ENCODE measurements at regions of chr12 and their contacts with region 1.

Region 1: DNA sequence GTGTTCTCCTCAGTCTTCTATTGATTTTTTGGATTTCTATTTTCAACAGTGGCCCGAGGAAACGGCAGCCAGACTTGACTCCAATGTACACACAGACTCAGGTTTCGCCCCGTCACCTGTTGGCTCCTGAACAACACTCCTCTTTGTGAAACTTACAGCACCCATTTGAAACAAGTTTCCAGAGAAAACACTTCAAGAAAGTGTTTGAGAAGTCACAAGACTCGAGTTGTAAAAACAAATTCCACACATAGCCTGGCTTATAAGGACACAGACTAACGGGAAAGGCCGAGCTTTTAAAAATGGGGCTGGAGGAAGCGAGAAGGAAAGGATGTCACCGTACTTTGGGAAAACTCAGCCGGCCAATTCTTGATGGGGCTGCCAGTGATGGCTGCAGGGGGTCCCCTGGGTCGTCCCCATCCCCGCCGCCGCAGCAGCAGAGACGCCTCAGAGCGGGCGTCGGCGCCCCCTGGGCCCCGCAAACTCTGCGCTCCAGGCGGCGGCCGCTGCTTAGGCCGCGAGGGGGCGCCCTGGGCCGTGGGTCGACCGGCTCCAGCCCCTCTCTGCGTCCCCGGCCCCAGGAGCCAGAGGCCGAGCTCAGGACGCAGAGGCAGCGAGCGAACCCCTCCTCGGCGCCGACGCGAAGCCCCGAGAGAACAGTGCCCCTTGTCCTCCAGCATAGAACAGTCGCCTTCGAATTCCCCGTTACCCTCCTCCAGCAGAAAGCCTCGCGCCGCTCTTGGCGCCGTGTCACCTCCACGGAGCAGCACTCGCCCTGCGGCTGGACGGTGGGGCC is 106.9 kb downstream of the PRICKLE1 start:
- DNase-seq: peak; percentile 56
- H3K4me3 ChIP-seq: peak overlapping the region; percentile 65 to 89 (median 88)
- H3K27ac ChIP-seq: peak overlapping the region; percentile 73
- H3K4me1 ChIP-seq: peaks cover 32% of the 10 kb centered on the region
- H3K27me3 ChIP-seq: no peaks in the 10 kb centered on the region
- CTCF ChIP-seq: peak; percentile 50 to 89

Region 2: DNA sequence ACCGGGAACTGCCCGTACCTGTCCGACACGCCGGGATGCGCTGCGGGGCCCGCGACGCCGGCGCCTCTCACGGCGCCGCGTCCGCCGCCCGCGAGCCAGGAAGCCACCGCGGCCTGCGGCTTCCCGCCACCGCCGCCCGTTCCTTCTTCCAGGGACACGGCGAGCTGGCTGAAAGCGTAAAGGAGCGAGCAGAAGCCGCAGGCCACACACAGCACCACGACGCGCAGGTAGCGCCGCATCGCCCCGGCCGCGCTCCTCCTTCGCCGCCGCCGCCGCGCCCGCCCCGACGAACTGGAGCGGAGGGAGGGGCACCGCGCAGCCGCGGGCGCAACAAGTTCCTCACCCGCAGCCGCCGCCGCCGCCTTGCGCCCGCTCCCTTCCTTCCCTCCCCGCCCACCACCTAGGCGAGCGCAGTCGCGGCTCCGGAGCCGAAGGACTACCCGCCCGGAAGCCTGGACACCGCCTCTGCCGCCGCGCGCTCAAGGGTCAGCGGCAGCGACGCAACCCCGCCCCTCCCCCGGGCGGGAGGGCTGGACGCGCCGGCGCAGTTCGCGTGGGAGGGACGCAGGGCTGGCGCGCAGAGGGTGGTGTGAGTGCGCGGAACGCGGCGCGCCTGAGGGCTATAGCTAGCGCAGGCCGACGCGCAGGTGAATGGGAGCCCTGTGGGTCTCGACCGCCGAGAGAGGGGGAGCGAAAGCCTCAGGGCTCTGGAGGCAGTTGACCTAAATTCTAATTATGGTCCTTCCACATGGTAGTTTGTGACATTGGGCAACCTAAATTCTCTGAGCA is 338.0 kb before region 1 on chr12 and contains the start of gene GXYLT1:
- CTCF ChIA-PET with region 1: no interaction called
- dilution Hi-C with region 1: no loop called
- in situ Hi-C with region 1: no loop called
- intact Hi-C with region 1: loop called (anchors 5 kb)
- DNase-seq: peak; percentile 97
- H3K4me3 ChIP-seq: peak within 1 kb of the TSS; percentile 78 to 96 (median 93)
- H3K27ac ChIP-seq: peak within 1 kb of the TSS; percentile 65
- H3K4me1 ChIP-seq: peaks cover 31% of the 10 kb centered on the region
- H3K27me3 ChIP-seq: no peaks in the 10 kb centered on the region
- CTCF ChIP-seq: no peak
- total RNA-seq, gene GXYLT1: 14.2 to 15.2 TPM

Region 3: GRCh38 chr12:42360747-42361403 is 121.8 kb before region 1 on chr12:
- CTCF ChIA-PET with region 1: no interaction called
- dilution Hi-C with region 1: no loop called
- in situ Hi-C with region 1: no loop called
- intact Hi-C with region 1: no loop called
- DNase-seq: no peak
- H3K4me3 ChIP-seq: no peak overlapping the region
- H3K27ac ChIP-seq: no peak overlapping the region
- H3K4me1 ChIP-seq: peaks cover 10% of the 10 kb centered on the region
- H3K27me3 ChIP-seq: no peaks in the 10 kb centered on the region
- CTCF ChIP-seq: no peak

Region 4: GRCh38 chr12:42756841-42757661 is 274.4 kb after region 1 on chr12:
- CTCF ChIA-PET with region 1: no interaction called
- dilution Hi-C with region 1: no loop called
- in situ Hi-C with region 1: no loop called
- intact Hi-C with region 1: loop called (anchors 10 kb)
- DNase-seq: peak; percentile 98
- H3K4me3 ChIP-seq: no peak overlapping the region
- H3K27ac ChIP-seq: peak overlapping the region; percentile 84
- H3K4me1 ChIP-seq: peaks cover 54% of the 10 kb centered on the region
- H3K27me3 ChIP-seq: no peaks in the 10 kb centered on the region
- CTCF ChIP-seq: no peak

Region 5: DNA sequence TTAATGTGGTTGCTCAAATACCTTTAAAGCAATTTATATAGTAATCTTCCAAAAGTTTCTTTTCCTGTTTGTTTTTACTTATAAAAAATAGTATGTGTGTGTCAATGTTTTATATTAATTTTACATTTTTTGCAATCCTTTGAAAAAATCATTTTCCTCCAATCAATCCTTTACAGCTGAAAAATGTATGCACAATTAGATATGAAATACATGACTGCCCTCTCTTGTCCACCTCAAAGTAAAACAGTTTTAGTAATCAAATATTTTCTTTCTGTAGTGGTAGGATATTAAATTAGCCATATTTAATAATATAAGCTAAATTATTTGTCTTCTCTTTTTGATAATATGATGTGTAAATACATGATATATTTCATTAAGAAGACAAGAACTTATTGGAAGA is 799.5 kb after region 1 on chr12:
- CTCF ChIA-PET with region 1: interaction called, 3 read pairs
- dilution Hi-C with region 1: loop called (anchors 25 kb)
- in situ Hi-C with region 1: loop called in 1 of 2 experiments (anchors 10 kb)
- intact Hi-C with region 1: loop called (anchors 1 kb)
- DNase-seq: no peak
- H3K4me3 ChIP-seq: no peak overlapping the region
- H3K27ac ChIP-seq: no peak overlapping the region
- H3K4me1 ChIP-seq: peaks cover 35% of the 10 kb centered on the region
- H3K27me3 ChIP-seq: no peaks in the 10 kb centered on the region
- CTCF ChIP-seq: peak; percentile 36 to 48

Region 6: GRCh38 chr12:43338848-43339526 is 856.3 kb after region 1 on chr12:
- CTCF ChIA-PET with region 1: no interaction called
- dilution Hi-C with region 1: no loop called
- in situ Hi-C with region 1: no loop called
- intact Hi-C with region 1: loop called (anchors 1 kb)
- DNase-seq: peak; percentile 48
- H3K4me3 ChIP-seq: no peak overlapping the region
- H3K27ac ChIP-seq: peak overlapping the region; percentile 23
- H3K4me1 ChIP-seq: peaks cover 30% of the 10 kb centered on the region
- H3K27me3 ChIP-seq: no peaks in the 10 kb centered on the region
- CTCF ChIP-seq: peak; percentile 63 to 88